OCI-LY7 (cell line): ENCODE measurements at regions of chr13 and their contacts with region 1.

Region 1: GRCh38 chr13:39952249-39953233 is 297.1 kb downstream of the COG6 start:
- DNase-seq: peak; percentile 52
- H3K4me3 ChIP-seq: no peak overlapping the region
- H3K27ac ChIP-seq: no peak overlapping the region
- H3K4me1 ChIP-seq: peaks cover 28% of the 10 kb centered on the region
- CTCF ChIP-seq: no peak

Region 2: GRCh38 chr13:40031031-40031430 is 78.5 kb after region 1 on chr13:
- CTCF ChIA-PET with region 1: no interaction called
- POLR2A ChIA-PET with region 1: interaction called, 11 read pairs
- intact Hi-C with region 1: no loop called
- DNase-seq: no peak
- H3K4me3 ChIP-seq: no peak overlapping the region
- H3K27ac ChIP-seq: no peak overlapping the region
- H3K4me1 ChIP-seq: peaks cover 10% of the 10 kb centered on the region
- CTCF ChIP-seq: no peak

Region 3: GRCh38 chr13:40528881-40529280 is 576.3 kb after region 1 on chr13:
- CTCF ChIA-PET with region 1: no interaction called
- POLR2A ChIA-PET with region 1: no interaction called
- intact Hi-C with region 1: no loop called
- DNase-seq: no peak
- H3K4me3 ChIP-seq: no peak overlapping the region
- H3K27ac ChIP-seq: no peak overlapping the region
- H3K4me1 ChIP-seq: peaks cover 53% of the 10 kb centered on the region
- CTCF ChIP-seq: no peak

Region 4: GRCh38 chr13:40660141-40660664 is 707.7 kb after region 1 on chr13:
- CTCF ChIA-PET with region 1: no interaction called
- POLR2A ChIA-PET with region 1: interaction called, 11 read pairs
- intact Hi-C with region 1: no loop called
- DNase-seq: no peak
- H3K4me3 ChIP-seq: peak overlapping the region; percentile 10
- H3K27ac ChIP-seq: peak overlapping the region; percentile 12
- H3K4me1 ChIP-seq: peaks cover 69% of the 10 kb centered on the region
- CTCF ChIP-seq: no peak